ENCODE measurements at regions of chr6 and their contacts with region 1.

Region 1: DNA sequence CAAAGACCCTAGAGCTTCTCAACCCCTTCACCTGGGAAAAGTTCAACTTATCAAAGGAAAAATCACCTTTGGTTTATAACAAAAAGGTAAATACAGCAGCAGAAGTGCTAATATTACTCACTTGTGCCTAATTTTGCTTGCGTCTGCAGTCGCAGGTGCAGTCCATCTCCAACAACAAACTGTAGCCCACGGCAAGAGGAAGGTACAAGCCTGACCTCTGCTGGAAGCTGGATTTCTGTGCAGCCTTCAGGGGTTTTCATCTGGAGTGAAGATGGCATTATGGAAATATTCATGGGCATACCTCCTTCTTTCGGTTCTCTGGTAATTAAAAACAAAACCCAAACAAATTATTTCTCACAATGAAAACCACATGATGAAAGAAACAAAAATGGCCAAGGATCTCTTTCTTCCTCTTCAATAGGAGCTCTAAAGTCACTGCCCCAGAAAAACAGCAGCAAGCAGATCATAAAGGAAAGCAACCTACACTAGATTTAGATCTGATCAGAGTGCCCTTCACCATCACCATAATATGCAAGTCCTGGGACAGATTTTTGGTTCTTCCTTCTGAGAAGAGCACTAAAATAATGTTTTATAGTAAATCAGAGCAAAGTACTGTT is 7.8 kb downstream of the UBE3D start:
- DNase-seq: peak; percentile 17 to 57 (median 30)
- ATAC-seq: peak; percentile 78
- H3K4me3 ChIP-seq: no peak overlapping the region
- H3K27ac ChIP-seq: no peak overlapping the region
- H3K4me1 ChIP-seq: no peaks in the 10 kb centered on the region; a peak in 1 of 5 replicates
- H3K27me3 ChIP-seq: no peaks in the 10 kb centered on the region
- CTCF ChIP-seq: peak; percentile 68 to 80 (median 75)
- EP300 ChIP-seq: no peak
- POLR2A ChIP-seq: no peak
- RAD21 ChIP-seq: peak; percentile 78 to 81

Region 2: GRCh38 chr6:82270881-82271645 is 786.8 kb before region 1 on chr6:
- CTCF ChIA-PET with region 1: interaction called, 17 read pairs
- POLR2A ChIA-PET with region 1: no interaction called
- in situ Hi-C with region 1: no loop called
- intact Hi-C with region 1: loop called (anchors 1 kb)
- DNase-seq: peak; percentile 38 to 44 (median 40)
- ATAC-seq: peak; percentile 71
- H3K4me3 ChIP-seq: no peak overlapping the region
- H3K27ac ChIP-seq: no peak overlapping the region
- H3K4me1 ChIP-seq: no peaks in the 10 kb centered on the region
- H3K27me3 ChIP-seq: peaks cover 4 to 5% of the 10 kb centered on the region in 2 experiments; a peak in 3 of 5 replicates
- CTCF ChIP-seq: peak in 2 of 3 experiments; percentile 36 to 73; a peak in 4 of 6 replicates
- EP300 ChIP-seq: no peak
- POLR2A ChIP-seq: no peak
- RAD21 ChIP-seq: peak; percentile 82 to 87

Region 3: GRCh38 chr6:82607998-82608725 is 449.7 kb before region 1 on chr6:
- CTCF ChIA-PET with region 1: no interaction called
- POLR2A ChIA-PET with region 1: no interaction called
- in situ Hi-C with region 1: no loop called
- intact Hi-C with region 1: loop called (anchors 10 kb)
- DNase-seq: no peak
- ATAC-seq: no peak
- H3K4me3 ChIP-seq: no peak overlapping the region
- H3K27ac ChIP-seq: no peak overlapping the region
- H3K4me1 ChIP-seq: no peaks in the 10 kb centered on the region
- H3K27me3 ChIP-seq: no peaks in the 10 kb centered on the region
- CTCF ChIP-seq: no peak
- EP300 ChIP-seq: no peak
- POLR2A ChIP-seq: no peak
- RAD21 ChIP-seq: no peak

Region 4: GRCh38 chr6:82823361-82823760 is 234.5 kb before region 1 on chr6:
- CTCF ChIA-PET with region 1: no interaction called
- POLR2A ChIA-PET with region 1: no interaction called
- in situ Hi-C with region 1: no loop called
- intact Hi-C with region 1: loop called (anchors 10 kb)
- DNase-seq: no peak
- ATAC-seq: no peak
- H3K4me3 ChIP-seq: no peak overlapping the region
- H3K27ac ChIP-seq: no peak overlapping the region
- H3K4me1 ChIP-seq: no peaks in the 10 kb centered on the region
- H3K27me3 ChIP-seq: no peaks in the 10 kb centered on the region
- CTCF ChIP-seq: no peak
- EP300 ChIP-seq: no peak
- POLR2A ChIP-seq: no peak
- RAD21 ChIP-seq: no peak

Region 5: DNA sequence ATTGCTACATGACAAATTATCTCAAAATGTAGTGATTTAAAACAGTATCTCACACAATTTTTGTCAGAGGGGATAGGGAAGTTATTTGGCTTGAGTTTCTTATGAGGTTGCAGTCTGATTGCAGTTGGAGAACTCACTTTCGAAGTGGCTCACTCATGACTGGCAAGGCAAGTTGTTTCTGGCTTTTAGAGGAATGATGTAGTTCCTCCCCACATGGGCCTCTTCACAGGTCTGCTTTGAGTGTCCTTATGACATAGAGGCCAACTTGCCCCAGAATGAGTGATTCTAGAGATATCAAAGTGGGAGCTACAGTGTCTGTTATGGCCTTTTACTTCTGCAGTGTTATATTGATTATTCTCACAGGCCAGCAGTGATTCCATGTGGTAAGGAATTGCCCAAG is 15.8 kb after region 1 on chr6:
- CTCF ChIA-PET with region 1: no interaction called
- POLR2A ChIA-PET with region 1: no interaction called
- in situ Hi-C with region 1: no loop called
- intact Hi-C with region 1: no loop called
- DNase-seq: no peak
- ATAC-seq: no peak
- H3K4me3 ChIP-seq: no peak overlapping the region
- H3K27ac ChIP-seq: no peak overlapping the region
- H3K4me1 ChIP-seq: peaks cover 0 to 5% of the 10 kb centered on the region in 2 experiments; a peak in 1 of 5 replicates
- H3K27me3 ChIP-seq: no peaks in the 10 kb centered on the region
- CTCF ChIP-seq: no peak
- EP300 ChIP-seq: no peak
- POLR2A ChIP-seq: no peak
- RAD21 ChIP-seq: no peak

Region 6: DNA sequence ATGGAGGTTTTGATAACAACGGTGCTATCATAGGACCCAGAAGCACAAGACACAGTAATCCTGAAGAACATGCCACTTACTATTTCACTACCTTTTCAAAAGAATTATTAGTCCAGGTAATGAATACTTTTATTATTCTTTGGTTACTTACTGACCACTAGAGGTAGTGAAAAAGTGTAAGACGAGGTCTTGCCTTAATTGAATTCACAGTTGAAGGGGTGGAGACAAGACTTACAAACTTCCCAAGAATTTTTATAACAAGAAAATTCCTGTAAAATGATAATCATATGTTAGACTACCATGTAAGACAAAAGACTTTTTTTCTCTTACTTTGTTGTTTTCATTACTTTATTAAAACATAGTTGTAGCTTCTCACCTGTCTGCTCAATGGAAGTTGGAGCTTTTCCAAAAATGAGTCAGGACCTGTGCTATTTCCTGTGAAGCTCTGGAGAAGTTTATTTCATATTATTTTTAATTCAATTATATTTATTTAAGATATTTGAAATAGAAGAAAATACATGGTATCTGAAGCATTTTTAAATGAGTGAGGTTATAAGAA is 62.0 kb after region 1 on chr6:
- CTCF ChIA-PET with region 1: no interaction called
- POLR2A ChIA-PET with region 1: no interaction called
- in situ Hi-C with region 1: no loop called
- intact Hi-C with region 1: no loop called
- DNase-seq: no peak
- ATAC-seq: no peak
- H3K4me3 ChIP-seq: no peak overlapping the region
- H3K27ac ChIP-seq: no peak overlapping the region
- H3K4me1 ChIP-seq: no peaks in the 10 kb centered on the region
- H3K27me3 ChIP-seq: no peaks in the 10 kb centered on the region
- CTCF ChIP-seq: no peak
- EP300 ChIP-seq: no peak
- POLR2A ChIP-seq: no peak
- RAD21 ChIP-seq: no peak